ENCODE measurements at regions of chr18 and their contacts with region 1.

Region 1: DNA sequence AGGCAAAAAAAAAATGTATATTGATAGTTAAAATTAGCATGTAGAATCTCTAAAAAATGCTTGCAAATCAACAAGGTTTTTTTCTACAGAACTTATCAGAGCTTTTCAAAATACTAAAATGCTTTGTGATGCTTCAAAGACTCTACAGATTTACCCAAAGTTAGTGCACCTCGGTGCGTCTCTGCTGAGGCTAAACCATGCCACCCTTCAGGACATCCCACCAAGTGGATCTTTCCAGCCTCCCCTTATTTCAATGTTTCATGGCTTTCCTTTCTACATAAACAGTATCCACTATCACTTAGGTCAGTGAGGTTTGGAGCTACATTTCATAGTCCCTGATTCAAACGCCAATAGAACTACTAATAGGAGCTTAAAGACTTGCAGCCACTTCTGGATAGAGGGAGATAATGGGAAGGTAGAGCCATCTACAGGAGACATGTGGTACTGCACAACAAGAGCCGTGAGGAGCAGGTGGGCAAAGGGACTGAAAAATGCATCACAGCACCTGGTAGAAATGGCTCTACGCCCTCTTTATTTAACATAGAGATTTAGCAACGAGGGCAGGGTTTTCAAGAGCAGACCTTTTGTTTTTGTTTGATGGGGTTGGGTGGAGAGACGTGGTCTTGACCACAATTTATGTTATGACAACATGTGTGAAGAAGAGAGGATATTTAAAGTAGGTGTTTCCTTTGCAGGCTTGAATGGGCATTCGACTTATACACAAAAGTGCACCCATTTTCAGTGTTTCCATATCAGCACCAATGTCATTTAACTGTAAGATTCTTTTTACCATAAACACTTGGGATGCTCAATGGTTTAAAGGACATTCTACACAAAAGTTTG is 56.1 kb upstream of the SLC35G4 start:
- DNase-seq: no peak
- ATAC-seq: peak; percentile 73
- H3K4me3 ChIP-seq: no peak overlapping the region
- H3K27ac ChIP-seq: no peak overlapping the region
- H3K4me1 ChIP-seq: no peaks in the 10 kb centered on the region
- H3K27me3 ChIP-seq: no peaks in the 10 kb centered on the region

Region 2: DNA sequence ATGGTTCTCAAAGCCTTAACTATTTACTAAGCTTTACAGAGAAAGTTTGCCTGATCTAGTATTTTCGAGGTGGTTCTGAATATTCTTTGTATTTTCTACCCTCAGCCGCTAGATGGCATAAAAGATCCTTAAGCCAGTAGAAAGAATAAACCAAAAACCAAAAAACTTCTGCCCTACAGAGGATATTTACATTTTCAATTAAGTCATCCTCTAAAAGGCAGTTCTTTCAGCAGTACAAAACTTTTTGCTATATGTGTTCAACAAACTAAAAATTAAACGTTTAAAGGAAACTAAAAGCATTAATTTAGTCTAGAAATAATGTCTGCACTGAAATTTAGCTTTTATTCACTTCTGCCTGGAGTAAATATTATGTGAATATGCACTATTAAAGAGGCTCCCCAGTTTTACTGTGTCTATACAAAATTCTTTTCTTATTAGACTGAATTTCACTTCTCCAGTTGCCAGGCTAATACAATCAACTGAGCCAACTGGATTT is 701.4 kb before region 1 on chr18:
- intact Hi-C with region 1: loop called (anchors 2 kb)
- DNase-seq: no peak
- ATAC-seq: peak; percentile 67
- H3K4me3 ChIP-seq: no peak overlapping the region
- H3K27ac ChIP-seq: no peak overlapping the region
- H3K4me1 ChIP-seq: no peaks in the 10 kb centered on the region
- H3K27me3 ChIP-seq: no peaks in the 10 kb centered on the region

Region 3: GRCh38 chr18:11040823-11041656 is 512.3 kb before region 1 on chr18:
- intact Hi-C with region 1: loop called in 1 of 2 experiments (anchors 5 kb)
- DNase-seq: no peak
- ATAC-seq: peak; percentile 69
- H3K4me3 ChIP-seq: no peak overlapping the region
- H3K27ac ChIP-seq: no peak overlapping the region
- H3K4me1 ChIP-seq: no peaks in the 10 kb centered on the region
- H3K27me3 ChIP-seq: no peaks in the 10 kb centered on the region

Region 4: GRCh38 chr18:11163665-11164064 is 389.7 kb before region 1 on chr18:
- intact Hi-C with region 1: loop called in 1 of 2 experiments (anchors 10 kb)
- DNase-seq: no peak
- ATAC-seq: no peak
- H3K4me3 ChIP-seq: no peak overlapping the region
- H3K27ac ChIP-seq: no peak overlapping the region
- H3K4me1 ChIP-seq: no peaks in the 10 kb centered on the region
- H3K27me3 ChIP-seq: no peaks in the 10 kb centered on the region

Region 5: GRCh38 chr18:11309172-11309571 is 244.1 kb before region 1 on chr18:
- intact Hi-C with region 1: loop called in 1 of 2 experiments (anchors 5 kb)
- DNase-seq: no peak
- ATAC-seq: no peak
- H3K4me3 ChIP-seq: no peak overlapping the region
- H3K27ac ChIP-seq: no peak overlapping the region
- H3K4me1 ChIP-seq: no peaks in the 10 kb centered on the region
- H3K27me3 ChIP-seq: no peaks in the 10 kb centered on the region

Region 6: GRCh38 chr18:11454021-11454420 is 99.3 kb before region 1 on chr18:
- intact Hi-C with region 1: no loop called
- DNase-seq: no peak
- ATAC-seq: no peak
- H3K4me3 ChIP-seq: no peak overlapping the region
- H3K27ac ChIP-seq: no peak overlapping the region
- H3K4me1 ChIP-seq: no peaks in the 10 kb centered on the region
- H3K27me3 ChIP-seq: no peaks in the 10 kb centered on the region

Region 7: GRCh38 chr18:11464129-11464528 is 89.2 kb before region 1 on chr18:
- intact Hi-C with region 1: no loop called
- DNase-seq: no peak
- ATAC-seq: no peak
- H3K4me3 ChIP-seq: no peak overlapping the region
- H3K27ac ChIP-seq: no peak overlapping the region
- H3K4me1 ChIP-seq: no peaks in the 10 kb centered on the region
- H3K27me3 ChIP-seq: no peaks in the 10 kb centered on the region

Measured in aorta (tissue), 5 donors.